Activated CD4-positive, alpha-beta memory T cell treated with anti-CD3 and anti-CD28 coated beads, Interleukin-2, amount 10 ng/mL, durations not matched to agents 7 days and 5 days (primary cell): ENCODE measurements at regions of chr19 and their contacts with region 1.

Region 1: GRCh38 chr19:43503501-43504425 is 783 bp downstream of the PHLDB3 start:
- DNase-seq: peak; percentile 98
- H3K4me3 Mint-ChIP-seq: peak overlapping the region; percentile 96
- H3K27ac Mint-ChIP-seq: peak overlapping the region; percentile 97
- H3K4me1 Mint-ChIP-seq: peaks cover 32% of the 10 kb centered on the region
- H3K27me3 Mint-ChIP-seq: no peaks in the 10 kb centered on the region

Region 2: GRCh38 chr19:43354305-43354627 is 149.5 kb before region 1 on chr19:
- CTCF ChIA-PET with region 1: no interaction called
- POLR2A ChIA-PET with region 1: no interaction called
- DNase-seq: no peak
- H3K4me3 Mint-ChIP-seq: no peak overlapping the region
- H3K27ac Mint-ChIP-seq: no peak overlapping the region
- H3K4me1 Mint-ChIP-seq: no peaks in the 10 kb centered on the region
- H3K27me3 Mint-ChIP-seq: peaks cover 4% of the 10 kb centered on the region

Region 3: GRCh38 chr19:43532962-43533545 is 29.3 kb after region 1 on chr19 and contains the start of gene ZNF575:
- CTCF ChIA-PET with region 1: interaction called, 4 read pairs
- POLR2A ChIA-PET with region 1: interaction called, 10 read pairs
- DNase-seq: peak; percentile 89
- H3K4me3 Mint-ChIP-seq: peak within 1 kb of the TSS; percentile 86
- H3K27ac Mint-ChIP-seq: peak within 1 kb of the TSS; percentile 98
- H3K4me1 Mint-ChIP-seq: peaks cover 26% of the 10 kb centered on the region
- H3K27me3 Mint-ChIP-seq: no peaks in the 10 kb centered on the region
- total RNA-seq, gene ZNF575: 4.1 to 4.8 TPM

Region 4: DNA sequence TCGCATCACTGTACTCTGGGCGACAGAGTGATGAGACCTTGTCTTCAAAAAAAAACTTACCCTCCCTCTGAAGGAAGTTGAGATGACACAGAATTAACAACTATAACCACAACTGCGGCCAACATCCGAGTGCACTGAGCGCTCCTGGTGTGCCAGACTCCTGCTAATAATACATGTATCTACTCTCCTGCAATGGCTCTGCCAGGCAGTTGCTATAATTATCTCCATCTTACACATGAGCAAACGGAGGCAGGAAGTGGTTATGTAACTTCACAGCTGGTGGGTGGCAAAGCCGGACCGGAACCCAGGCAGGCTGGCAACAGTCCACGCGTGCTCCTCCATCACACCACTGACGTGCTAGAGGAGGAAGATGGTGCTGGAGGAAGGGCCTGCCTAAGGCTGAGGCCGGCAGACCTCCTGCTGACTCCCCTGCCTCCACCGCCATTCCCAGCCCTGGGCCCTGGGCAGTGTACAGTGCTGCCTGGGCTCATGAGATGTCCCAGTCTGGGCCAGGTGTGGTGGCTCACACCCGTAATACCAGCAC is 59.0 kb after region 1 on chr19:
- CTCF ChIA-PET with region 1: no interaction called
- POLR2A ChIA-PET with region 1: no interaction called
- DNase-seq: peak; percentile 85
- H3K4me3 Mint-ChIP-seq: peak overlapping the region; percentile 54
- H3K27ac Mint-ChIP-seq: peak overlapping the region; percentile 99
- H3K4me1 Mint-ChIP-seq: peaks cover 45% of the 10 kb centered on the region
- H3K27me3 Mint-ChIP-seq: no peaks in the 10 kb centered on the region

Region 5: DNA sequence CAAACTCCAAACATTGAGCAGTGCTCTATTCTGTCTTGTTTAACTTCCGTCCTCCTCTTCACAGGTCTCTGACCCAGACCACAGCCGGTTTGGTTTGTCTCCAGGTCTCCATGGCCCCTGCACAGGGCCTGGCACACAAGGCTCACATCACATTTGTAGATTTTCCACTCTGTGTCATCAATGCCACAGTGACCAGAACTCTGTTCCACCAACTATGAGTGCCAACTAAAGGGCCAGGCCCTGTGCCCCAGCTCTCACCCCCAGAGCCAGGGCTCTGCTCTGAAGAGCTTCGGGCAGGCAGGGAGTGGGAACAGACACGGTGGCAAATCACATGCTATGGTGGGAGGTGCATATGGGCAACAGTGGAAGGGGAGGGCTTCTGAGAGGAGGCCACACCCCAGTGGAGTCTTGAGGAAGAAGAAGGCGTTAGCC is 235.0 kb after region 1 on chr19:
- CTCF ChIA-PET with region 1: no interaction called
- POLR2A ChIA-PET with region 1: no interaction called
- DNase-seq: no peak
- H3K4me3 Mint-ChIP-seq: no peak overlapping the region
- H3K27ac Mint-ChIP-seq: peak overlapping the region; percentile 61
- H3K4me1 Mint-ChIP-seq: peaks cover 28% of the 10 kb centered on the region
- H3K27me3 Mint-ChIP-seq: no peaks in the 10 kb centered on the region